Naive thymus-derived CD4-positive, alpha-beta T cell (primary cell): ENCODE measurements at regions of chr14 and their contacts with region 1.

Region 1: DNA sequence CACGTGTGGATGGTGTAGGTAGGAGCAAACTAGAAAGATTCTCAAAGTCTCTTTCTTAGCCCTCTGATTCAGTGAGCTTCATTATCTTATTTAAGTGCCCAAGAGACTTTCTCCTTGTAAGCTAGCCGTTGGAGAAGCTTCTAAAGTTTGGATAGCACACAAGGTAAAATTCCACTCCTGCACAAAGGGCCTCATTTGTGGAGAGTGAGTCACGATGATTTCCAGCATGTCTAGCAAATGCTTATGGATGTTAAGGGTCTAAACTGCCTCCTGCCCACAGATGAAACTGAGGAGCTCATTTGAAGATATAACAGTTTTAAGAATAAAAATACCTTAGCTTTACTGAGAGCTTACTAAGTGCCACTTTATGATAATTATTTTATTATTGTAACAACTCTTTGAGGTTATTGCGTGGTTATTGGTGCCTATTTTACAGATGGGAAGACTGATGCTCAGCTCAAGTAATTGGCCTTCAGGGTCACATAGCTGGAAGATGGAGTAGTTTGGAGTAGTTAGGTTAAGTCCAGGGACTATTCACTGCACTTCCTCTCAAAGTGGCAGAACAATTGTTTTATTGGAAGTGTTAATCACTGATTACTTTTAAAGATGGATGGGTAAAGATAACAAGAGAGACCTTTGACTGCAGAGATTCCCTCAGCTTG is 78.7 kb upstream of the HIF1A start:
- DNase-seq: no peak
- ATAC-seq: no peak
- H3K4me3 ChIP-seq: no peak overlapping the region
- H3K4me3 Mint-ChIP-seq: peak overlapping the region in 1 of 10 donors; percentile 9
- H3K27ac ChIP-seq: no peak overlapping the region
- H3K27ac Mint-ChIP-seq: no peak overlapping the region
- H3K4me1 ChIP-seq: peaks cover 0 to 4% of the 10 kb centered on the region in 2 donors
- H3K4me1 Mint-ChIP-seq: peaks cover 3 to 38% (median 19%) of the 10 kb centered on the region in 7 donors
- H3K27me3 ChIP-seq: no peaks in the 10 kb centered on the region
- H3K27me3 Mint-ChIP-seq: peaks cover 0 to 3% (median 0%) of the 10 kb centered on the region in 5 donors

Region 2: GRCh38 chr14:61631045-61631687 is 14.5 kb after region 1 on chr14:
- CTCF ChIA-PET with region 1: no interaction called
- POLR2A ChIA-PET with region 1: no interaction called
- intact Hi-C with region 1: loop called in 1 of 2 experiments (anchors 2 kb)
- DNase-seq: no peak
- ATAC-seq: no peak
- H3K4me3 ChIP-seq: no peak overlapping the region
- H3K4me3 Mint-ChIP-seq: peak overlapping the region in 1 of 10 donors; percentile 7
- H3K27ac ChIP-seq: no peak overlapping the region
- H3K27ac Mint-ChIP-seq: no peak overlapping the region
- H3K4me1 ChIP-seq: no peaks in the 10 kb centered on the region
- H3K4me1 Mint-ChIP-seq: peaks cover 0 to 15% (median 0%) of the 10 kb centered on the region in 7 donors
- H3K27me3 ChIP-seq: no peaks in the 10 kb centered on the region
- H3K27me3 Mint-ChIP-seq: no peaks in the 10 kb centered on the region